A673 (cell line): ENCODE measurements at regions of chr1 and their contacts with region 1.

Region 1: GRCh38 chr1:82775402-82776000 is 974.8 kb downstream of the ADGRL2 start:
- DNase-seq: peak; percentile 83
- H3K4me3 ChIP-seq: no peak overlapping the region
- H3K27ac ChIP-seq: no peak overlapping the region
- H3K4me1 ChIP-seq: no peaks in the 10 kb centered on the region
- H3K27me3 ChIP-seq: peaks cover 24% of the 10 kb centered on the region
- CTCF ChIP-seq: peak; percentile 91

Region 2: DNA sequence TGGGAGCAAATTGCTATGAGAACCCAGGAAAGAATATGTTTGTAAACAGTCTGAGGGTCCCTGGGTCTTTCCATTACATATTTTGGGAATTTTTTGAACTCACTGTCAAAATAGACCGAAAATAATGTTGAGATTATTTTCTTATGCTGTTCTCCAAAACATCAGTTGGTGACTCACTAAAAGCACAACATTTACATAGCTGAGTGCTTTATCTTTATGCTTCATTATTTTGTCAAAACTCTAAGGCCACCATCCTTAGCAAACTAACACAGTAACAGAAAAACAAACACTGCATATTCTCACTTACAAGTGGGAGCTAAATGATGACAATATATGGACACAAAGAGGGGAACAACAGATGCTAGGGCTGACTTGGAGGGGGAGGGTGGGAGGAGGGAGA is 515.5 kb before region 1 on chr1:
- CTCF ChIA-PET with region 1: no interaction called
- POLR2A ChIA-PET with region 1: no interaction called
- intact Hi-C with region 1: no loop called
- DNase-seq: no peak
- H3K4me3 ChIP-seq: no peak overlapping the region
- H3K27ac ChIP-seq: no peak overlapping the region
- H3K4me1 ChIP-seq: no peaks in the 10 kb centered on the region
- H3K27me3 ChIP-seq: no peaks in the 10 kb centered on the region
- CTCF ChIP-seq: no peak

Region 3: GRCh38 chr1:83043244-83043643 is 267.7 kb after region 1 on chr1:
- CTCF ChIA-PET with region 1: no interaction called
- POLR2A ChIA-PET with region 1: no interaction called
- intact Hi-C with region 1: no loop called
- DNase-seq: no peak
- H3K4me3 ChIP-seq: no peak overlapping the region
- H3K27ac ChIP-seq: no peak overlapping the region
- H3K4me1 ChIP-seq: no peaks in the 10 kb centered on the region
- H3K27me3 ChIP-seq: no peaks in the 10 kb centered on the region
- CTCF ChIP-seq: no peak

Region 4: DNA sequence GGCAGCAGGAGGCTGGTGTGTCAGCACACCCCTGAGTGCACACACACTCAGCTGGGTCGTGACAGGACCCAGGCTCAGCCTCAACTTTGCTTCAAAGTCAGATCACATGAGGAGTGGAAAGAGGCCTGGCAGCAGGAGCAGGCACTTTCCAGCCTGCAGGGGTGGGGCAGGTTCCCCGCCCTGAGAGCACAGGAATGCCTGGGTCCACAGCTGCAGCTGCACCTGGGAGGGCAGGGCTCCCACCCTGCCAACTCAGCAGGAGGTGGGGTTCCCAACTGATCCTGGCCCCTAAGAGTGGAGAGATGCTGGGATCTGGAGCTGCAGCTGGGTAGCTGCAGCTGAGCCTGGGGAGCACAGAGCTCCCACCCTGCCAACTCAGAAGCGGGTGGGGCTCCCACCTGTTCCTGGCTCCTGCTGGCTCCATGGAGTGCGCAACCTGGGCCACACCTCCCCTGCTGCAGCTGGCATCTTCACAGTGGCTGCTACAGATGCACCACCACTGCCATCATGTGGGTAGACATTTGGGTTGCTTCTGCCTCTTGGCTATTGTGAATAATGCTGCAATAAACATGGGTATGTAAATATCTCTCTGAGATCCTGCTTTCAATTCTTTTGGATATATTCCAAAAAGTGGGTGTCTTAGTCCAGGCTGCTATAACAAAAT is 808.0 kb after region 1 on chr1:
- CTCF ChIA-PET with region 1: no interaction called
- POLR2A ChIA-PET with region 1: no interaction called
- intact Hi-C with region 1: loop called (anchors 10 kb)
- DNase-seq: peak; percentile 7
- H3K4me3 ChIP-seq: no peak overlapping the region
- H3K27ac ChIP-seq: no peak overlapping the region
- H3K4me1 ChIP-seq: no peaks in the 10 kb centered on the region
- H3K27me3 ChIP-seq: no peaks in the 10 kb centered on the region
- CTCF ChIP-seq: peak; percentile 35